Mammary epithelial cell (primary cell): ENCODE measurements at regions of chr3 and their contacts with region 1.

Region 1: DNA sequence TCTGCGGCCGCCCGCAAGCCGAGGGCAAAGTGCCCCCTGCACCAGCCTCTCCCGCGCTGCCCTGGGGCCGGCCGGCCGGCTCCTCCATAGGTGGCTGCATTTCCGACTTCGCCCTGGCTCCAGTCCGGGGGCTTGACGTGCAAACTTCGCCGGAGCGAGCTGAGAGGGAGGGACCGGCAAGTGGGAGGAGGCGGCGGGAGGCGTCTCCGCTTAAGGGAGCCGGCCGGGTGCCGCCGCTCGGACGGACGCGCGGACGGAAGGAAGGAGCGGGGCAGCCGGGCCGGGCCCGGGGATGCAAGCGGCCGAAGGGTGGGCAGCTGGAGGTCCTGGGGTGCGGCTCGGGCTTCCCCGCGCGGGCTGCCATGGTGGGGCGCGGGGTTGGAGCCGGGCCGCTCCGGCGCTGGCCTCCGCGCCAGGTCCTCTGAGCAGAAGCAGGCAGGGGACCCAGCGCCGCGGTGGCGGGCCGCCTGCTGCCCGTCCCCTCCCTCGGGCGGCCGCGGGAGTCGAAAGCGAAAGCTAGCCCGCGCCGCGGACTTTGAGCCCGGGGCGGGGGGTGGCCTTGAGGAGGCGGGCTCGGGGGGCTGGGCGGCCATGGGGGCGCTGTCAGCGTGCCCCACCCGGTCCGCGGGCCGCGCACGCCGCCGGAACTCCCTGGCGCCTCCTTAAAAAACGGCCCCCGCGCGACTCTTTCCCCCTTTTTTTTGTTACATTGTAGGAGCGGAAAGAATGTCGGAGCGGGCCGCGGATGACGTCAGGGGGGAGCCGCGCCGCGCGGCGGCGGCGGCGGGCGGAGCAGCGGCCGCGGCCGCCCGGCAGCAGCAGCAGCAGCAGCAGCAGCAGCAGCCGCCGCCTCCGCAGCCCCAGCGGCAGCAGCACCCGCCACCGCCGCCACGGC is at the start of gene SCAANT1:
- DNase-seq: peak; percentile 86
- H3K4me3 ChIP-seq: peak within 1 kb of the TSS; percentile 70 to 94 (median 72)
- H3K27ac ChIP-seq: peak within 1 kb of the TSS; percentile 84
- H3K4me1 ChIP-seq: peaks cover 30% of the 10 kb centered on the region
- H3K27me3 ChIP-seq: no peaks in the 10 kb centered on the region
- CTCF ChIP-seq: no peak
- total RNA-seq, gene SCAANT1: not detected

Region 2: DNA sequence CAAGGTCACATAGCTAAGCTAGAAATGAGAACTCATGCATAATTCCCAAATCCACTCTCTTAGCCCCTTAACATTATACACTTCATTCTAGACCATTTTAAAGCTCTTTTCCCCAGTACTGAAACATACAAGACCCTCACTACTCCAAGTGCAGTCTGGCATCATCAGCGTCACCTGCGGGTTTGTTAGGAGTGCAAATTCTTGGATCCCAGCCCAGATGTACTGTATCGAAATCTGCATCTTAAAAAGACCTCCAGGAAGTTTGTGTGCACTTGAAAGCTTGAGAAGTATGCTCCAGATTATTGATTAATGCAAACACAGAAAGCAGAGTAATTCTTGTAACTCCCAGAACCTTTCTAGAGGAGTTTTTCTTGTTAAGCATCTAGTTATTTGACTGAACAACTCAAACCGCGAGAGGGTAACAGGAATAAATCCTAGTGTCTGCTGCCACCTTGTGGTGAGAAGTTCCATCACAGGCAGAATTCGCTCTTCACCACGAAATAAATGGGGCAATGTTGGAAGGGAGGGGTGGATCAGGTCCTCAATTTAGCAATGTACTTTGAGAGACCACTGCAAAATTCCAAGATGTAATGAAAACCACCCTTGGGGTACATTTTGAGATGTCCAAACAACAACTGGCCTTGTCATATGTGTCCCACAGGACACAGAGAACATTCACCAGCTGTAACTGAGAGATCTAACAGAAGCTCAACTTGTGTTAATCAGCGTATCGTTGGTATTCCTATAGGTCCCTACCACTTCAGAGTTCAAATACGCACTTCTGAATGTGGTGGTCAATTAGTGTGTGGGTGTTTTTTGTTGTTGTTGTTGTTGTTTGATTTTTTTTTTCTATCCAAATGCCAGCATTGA is 93.6 kb before region 1 on chr3:
- CTCF ChIA-PET with region 1: interaction called, 4 read pairs
- dilution Hi-C with region 1: loop called (anchors 5 kb)
- in situ Hi-C with region 1: no loop called
- intact Hi-C with region 1: no loop called
- DNase-seq: peak; percentile 33
- H3K4me3 ChIP-seq: no peak overlapping the region
- H3K27ac ChIP-seq: no peak overlapping the region
- H3K4me1 ChIP-seq: peaks cover 8% of the 10 kb centered on the region
- H3K27me3 ChIP-seq: no peaks in the 10 kb centered on the region
- CTCF ChIP-seq: peak; percentile 78 to 80

Region 3: DNA sequence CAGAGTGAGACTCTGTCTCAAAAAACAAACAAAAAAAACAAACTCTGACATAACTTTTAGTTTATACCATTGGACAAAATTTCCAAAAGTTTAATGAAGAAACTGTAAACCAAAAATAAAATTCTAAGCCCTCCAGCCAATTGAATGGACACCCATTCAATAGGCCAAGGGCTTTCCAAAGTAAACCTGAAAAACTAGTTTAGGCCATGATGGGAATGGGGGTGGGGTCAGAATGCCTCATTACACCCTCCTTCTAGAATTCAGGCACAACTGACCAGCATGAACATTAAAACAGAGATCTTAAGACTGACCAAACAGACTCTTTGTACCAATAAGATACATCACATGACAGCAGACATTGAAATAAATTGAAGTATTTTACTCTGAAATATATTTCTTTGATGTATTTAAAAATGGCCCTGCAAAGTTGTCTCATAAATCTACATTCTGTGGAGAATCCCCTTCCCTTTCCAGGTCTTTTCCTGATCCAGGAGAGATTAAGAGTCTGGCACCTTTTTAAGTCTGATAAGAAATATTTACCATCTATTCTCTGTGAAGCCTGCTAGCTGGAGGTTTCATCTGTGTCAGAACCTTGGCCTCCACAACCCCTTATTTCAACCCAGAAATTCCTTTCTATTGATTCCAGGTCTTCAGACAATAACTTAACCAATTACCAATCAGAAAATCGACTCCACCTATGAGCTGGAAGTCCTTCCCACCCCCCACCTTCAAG is 64.2 kb before region 1 on chr3:
- CTCF ChIA-PET with region 1: no interaction called
- dilution Hi-C with region 1: loop called (anchors 5 kb)
- in situ Hi-C with region 1: no loop called
- intact Hi-C with region 1: no loop called
- DNase-seq: peak; percentile 43
- H3K4me3 ChIP-seq: no peak overlapping the region
- H3K27ac ChIP-seq: no peak overlapping the region
- H3K4me1 ChIP-seq: peaks cover 10% of the 10 kb centered on the region
- H3K27me3 ChIP-seq: no peaks in the 10 kb centered on the region
- CTCF ChIP-seq: no peak

Region 4: GRCh38 chr3:63943678-63944077 is 31.6 kb after region 1 on chr3:
- CTCF ChIA-PET with region 1: no interaction called
- dilution Hi-C with region 1: no loop called
- in situ Hi-C with region 1: no loop called
- intact Hi-C with region 1: loop called (anchors 2 kb)
- DNase-seq: no peak
- H3K4me3 ChIP-seq: no peak overlapping the region
- H3K27ac ChIP-seq: no peak overlapping the region
- H3K4me1 ChIP-seq: peaks cover 21% of the 10 kb centered on the region
- H3K27me3 ChIP-seq: no peaks in the 10 kb centered on the region
- CTCF ChIP-seq: no peak

Region 5: DNA sequence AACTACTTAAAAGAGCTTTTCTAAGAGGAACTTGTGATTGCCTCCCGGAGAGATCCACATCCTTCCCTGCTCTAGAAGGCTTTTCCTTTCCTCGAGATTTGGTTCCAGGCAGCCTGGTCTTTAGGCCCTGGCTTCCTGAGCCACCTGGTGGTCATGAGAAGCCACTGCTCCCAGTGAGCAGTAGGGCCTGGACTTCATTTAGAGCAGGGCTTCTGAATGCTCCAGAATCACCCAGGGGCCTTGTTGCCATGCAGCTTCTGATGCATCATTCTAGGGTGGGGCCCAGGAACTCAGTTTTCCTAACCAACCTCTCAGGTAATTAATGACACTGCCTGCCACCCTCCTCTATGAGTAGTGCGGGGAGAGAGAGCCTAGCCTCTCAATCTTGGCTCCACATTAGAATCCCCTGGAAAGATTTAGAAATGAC is 81.5 kb after region 1 on chr3:
- CTCF ChIA-PET with region 1: no interaction called
- dilution Hi-C with region 1: no loop called
- in situ Hi-C with region 1: no loop called
- intact Hi-C with region 1: loop called (anchors 1 kb)
- DNase-seq: peak; percentile 82
- H3K4me3 ChIP-seq: no peak overlapping the region
- H3K27ac ChIP-seq: peak overlapping the region; percentile 50
- H3K4me1 ChIP-seq: peaks cover 10% of the 10 kb centered on the region
- H3K27me3 ChIP-seq: no peaks in the 10 kb centered on the region
- CTCF ChIP-seq: peak; percentile 97 to 99

Region 6: DNA sequence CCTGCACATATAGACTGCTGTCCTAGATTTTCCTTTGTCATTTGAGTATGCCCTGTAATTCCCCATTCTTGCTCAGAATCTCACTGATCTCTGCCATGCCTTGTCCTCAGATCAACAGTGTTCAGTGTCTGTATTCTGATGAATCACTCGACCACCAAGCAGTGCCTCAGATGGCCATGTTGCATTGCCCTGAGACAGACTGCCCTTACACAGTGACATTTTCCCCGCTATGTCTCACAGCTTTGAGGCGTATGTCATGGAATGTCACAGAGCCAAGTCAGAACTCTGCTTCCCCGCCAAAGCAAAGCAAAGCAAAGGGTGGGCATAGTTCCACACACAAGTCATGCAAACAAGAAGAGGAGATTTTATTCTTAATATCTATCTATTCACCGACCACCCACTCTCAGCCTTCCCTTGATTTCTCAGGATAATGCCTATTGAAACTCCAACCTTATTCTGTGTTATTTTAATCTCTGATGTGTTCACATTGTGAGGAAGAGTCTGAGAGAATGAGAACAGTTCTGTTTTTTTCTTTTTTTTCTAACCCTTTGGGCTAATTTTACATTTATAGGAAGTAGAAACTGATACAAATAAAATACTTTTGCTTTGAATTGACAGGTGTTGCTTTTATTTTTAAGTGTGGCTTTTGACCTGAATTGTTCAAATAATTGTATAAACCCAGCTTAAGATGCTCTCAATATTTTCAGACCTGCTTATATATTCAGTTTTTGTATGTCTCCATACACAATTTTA is 128.0 kb after region 1 on chr3:
- CTCF ChIA-PET with region 1: no interaction called
- dilution Hi-C with region 1: no loop called
- in situ Hi-C with region 1: no loop called
- intact Hi-C with region 1: no loop called
- DNase-seq: no peak
- H3K4me3 ChIP-seq: no peak overlapping the region
- H3K27ac ChIP-seq: no peak overlapping the region
- H3K4me1 ChIP-seq: no peaks in the 10 kb centered on the region
- H3K27me3 ChIP-seq: no peaks in the 10 kb centered on the region
- CTCF ChIP-seq: no peak